Posterior vena cava (tissue), 2 donors: ENCODE measurements at regions of chr6 and their contacts with region 1.

Region 1: DNA sequence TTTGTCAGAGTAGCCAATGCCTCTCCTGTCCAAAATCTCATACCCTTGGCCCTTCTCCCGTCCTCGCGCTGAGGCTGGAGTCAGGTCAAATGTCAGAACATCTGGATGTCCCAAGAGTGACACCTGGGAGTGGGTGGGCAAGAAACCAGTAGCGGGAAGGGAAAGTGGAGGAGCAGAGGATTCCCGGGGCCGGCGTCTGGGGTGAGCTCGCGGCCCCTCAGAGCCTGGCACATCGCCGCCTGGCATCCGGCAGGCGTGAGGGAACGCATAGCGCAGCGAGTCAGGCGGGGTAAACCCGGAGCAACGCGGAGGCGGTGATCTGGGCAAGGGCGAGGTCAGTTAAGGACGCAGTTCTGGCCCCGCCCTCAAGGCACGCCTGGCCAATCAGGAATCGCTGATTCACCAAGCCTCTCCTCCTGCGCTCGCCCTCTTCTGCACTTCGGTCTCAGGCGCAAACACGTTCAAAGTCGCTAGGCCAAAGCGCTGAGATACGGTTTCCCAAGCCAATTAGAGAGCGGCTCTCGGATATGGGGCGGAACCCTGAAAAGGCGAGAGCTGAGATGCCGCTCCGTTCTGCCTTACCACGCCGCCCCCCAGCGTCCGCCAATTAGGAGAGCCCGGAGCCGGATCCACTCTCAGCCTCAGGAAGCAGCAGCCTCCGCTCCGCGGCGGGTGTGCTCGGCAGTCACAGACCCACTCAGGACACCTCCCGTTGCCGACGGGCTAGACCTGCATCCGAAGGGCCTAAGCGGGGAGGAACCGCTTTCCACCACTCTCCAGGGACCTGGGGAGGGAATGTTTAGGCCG is 22.5 kb downstream of the VPS52 start:
- DNase-seq: peak; percentile 98

Region 2: GRCh38 chr6:32885698-32886286 is 363.3 kb before region 1 on chr6:
- intact Hi-C with region 1: no loop called
- DNase-seq: no peak

Region 3: DNA sequence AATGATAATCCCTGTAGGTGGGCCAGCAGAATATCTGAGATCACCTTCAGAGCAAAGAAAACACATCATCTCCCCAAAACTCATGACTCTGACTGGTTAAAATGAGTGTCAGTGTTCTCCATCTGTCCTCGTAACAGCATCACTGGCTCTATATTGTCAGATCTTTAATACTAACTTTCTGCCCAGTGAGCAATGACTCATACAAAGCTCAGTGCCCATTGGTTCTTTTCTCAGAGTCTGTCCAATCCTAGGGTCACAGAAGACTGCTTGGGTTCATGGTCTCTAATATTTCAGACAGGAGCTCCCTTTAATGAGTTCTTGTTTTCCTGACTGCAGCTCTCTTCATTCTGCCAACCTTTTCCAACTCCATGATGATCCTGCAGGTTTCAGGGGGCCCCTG is 137.0 kb before region 1 on chr6:
- intact Hi-C with region 1: loop called (anchors 5 to 10 kb)
- DNase-seq: no peak

Region 4: GRCh38 chr6:33118525-33119123 is 130.5 kb before region 1 on chr6:
- intact Hi-C with region 1: loop called (anchors 5 to 10 kb)
- DNase-seq: no peak

Region 5: GRCh38 chr6:33161354-33162331 is 87.5 kb before region 1 on chr6:
- intact Hi-C with region 1: loop called in 1 of 2 experiments (anchors 10 kb)
- DNase-seq: peak; percentile 96

Region 6: GRCh38 chr6:33271458-33272274 is 22.5 kb after region 1 on chr6 and contains the starts of genes RPS18 and VPS52:
- intact Hi-C with region 1: no loop called
- DNase-seq: peak; percentile 97
- total RNA-seq, gene RPS18: 1,709 to 1,844 TPM
- total RNA-seq, gene VPS52: 27.8 to 44.0 TPM

Region 7: GRCh38 chr6:33397541-33397940 is 148.4 kb after region 1 on chr6:
- intact Hi-C with region 1: no loop called
- DNase-seq: no peak